PC-9 (cell line): ENCODE measurements at regions of chr5 and their contacts with region 1.

Region 1: GRCh38 chr5:5288201-5288600 is 134.3 kb upstream of the ICE1 start:
- DNase-seq: peak; percentile 55 to 88
- H3K4me3 ChIP-seq: no peak overlapping the region
- H3K27ac ChIP-seq: peak overlapping the region; percentile 84
- H3K4me1 ChIP-seq: peaks cover 29% of the 10 kb centered on the region
- H3K27me3 ChIP-seq: no peaks in the 10 kb centered on the region
- CTCF ChIP-seq: no peak

Region 2: GRCh38 chr5:5340206-5340729 is 52.1 kb after region 1 on chr5:
- CTCF ChIA-PET with region 1: interaction called, 3 read pairs
- POLR2A ChIA-PET with region 1: no interaction called
- intact Hi-C with region 1: loop called (anchors 1 kb)
- DNase-seq: peak; percentile 61 to 95
- H3K4me3 ChIP-seq: no peak overlapping the region
- H3K27ac ChIP-seq: no peak overlapping the region
- H3K4me1 ChIP-seq: peaks cover 25% of the 10 kb centered on the region
- H3K27me3 ChIP-seq: no peaks in the 10 kb centered on the region
- CTCF ChIP-seq: peak; percentile 55; the same call in 1 of the 2 replicates

Region 3: DNA sequence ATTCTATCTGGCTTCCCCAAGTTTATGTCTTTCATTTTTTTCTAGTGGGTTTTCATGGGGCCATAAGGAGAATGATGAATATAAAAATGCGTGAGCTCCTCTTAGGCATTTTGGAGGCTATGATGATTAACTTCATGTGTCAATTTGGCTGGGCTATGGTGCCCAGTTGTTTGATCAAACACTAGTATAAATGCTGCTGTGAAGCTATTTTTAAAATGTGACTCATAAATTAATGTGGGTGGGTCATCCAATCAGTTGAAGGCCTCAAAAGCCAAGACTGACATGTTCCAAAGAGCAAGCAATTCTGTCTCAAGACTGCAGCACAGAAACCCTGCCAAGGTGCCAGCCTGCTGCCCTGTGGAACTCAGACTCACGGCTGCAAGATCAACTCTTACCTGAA is 109.8 kb after region 1 on chr5:
- CTCF ChIA-PET with region 1: no interaction called
- POLR2A ChIA-PET with region 1: no interaction called
- intact Hi-C with region 1: loop called (anchors 1 kb)
- DNase-seq: no peak
- H3K4me3 ChIP-seq: no peak overlapping the region
- H3K27ac ChIP-seq: no peak overlapping the region
- H3K4me1 ChIP-seq: no peaks in the 10 kb centered on the region
- H3K27me3 ChIP-seq: no peaks in the 10 kb centered on the region
- CTCF ChIP-seq: no peak

Region 4: DNA sequence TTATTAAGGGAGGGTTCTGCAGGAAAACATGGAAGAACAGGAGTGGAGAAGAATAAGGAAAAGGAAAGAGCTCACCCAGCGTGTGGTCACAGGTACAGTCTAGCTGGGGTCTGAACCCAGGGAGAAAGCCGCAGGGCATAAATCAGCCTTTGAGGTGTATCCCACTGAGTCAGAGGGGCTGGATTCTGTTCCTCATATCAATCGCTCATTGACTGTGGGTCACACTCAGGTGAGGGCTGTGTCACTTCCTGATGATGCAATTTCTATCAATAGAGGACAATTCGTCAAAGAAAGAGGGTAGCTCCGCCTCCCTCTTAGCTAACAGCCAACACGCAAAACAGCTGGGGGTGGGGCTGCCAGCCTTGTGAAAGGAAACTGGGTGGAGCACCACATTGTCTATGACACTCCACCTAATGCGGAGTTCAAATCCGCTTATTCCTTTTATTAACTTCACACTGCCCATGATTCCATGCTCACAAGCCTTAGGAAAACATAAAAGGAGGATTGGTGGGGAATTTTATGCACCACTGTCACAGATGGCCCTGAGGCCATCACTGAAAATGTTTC is 310.4 kb after region 1 on chr5:
- CTCF ChIA-PET with region 1: no interaction called
- POLR2A ChIA-PET with region 1: no interaction called
- intact Hi-C with region 1: no loop called
- DNase-seq: peak in 1 of 2 experiments; percentile 89
- H3K4me3 ChIP-seq: peak overlapping the region; percentile 5; the same call in 1 of the 2 replicates
- H3K27ac ChIP-seq: peak overlapping the region; percentile 60
- H3K4me1 ChIP-seq: peaks cover 18% of the 10 kb centered on the region
- H3K27me3 ChIP-seq: no peaks in the 10 kb centered on the region
- CTCF ChIP-seq: no peak

Region 5: GRCh38 chr5:5845403-5845802 is 557.2 kb after region 1 on chr5:
- CTCF ChIA-PET with region 1: no interaction called
- POLR2A ChIA-PET with region 1: no interaction called
- intact Hi-C with region 1: no loop called
- DNase-seq: no peak
- H3K4me3 ChIP-seq: no peak overlapping the region
- H3K27ac ChIP-seq: no peak overlapping the region
- H3K4me1 ChIP-seq: no peaks in the 10 kb centered on the region
- H3K27me3 ChIP-seq: no peaks in the 10 kb centered on the region
- CTCF ChIP-seq: no peak